CD4-positive, alpha-beta memory T cell (primary cell): ENCODE measurements at regions of chr1 and their contacts with region 1.

Region 1: GRCh38 chr1:99849744-99850458 is at the start of gene AGL:
- DNase-seq: peak; percentile 87 to 89 (median 88)
- H3K4me3 ChIP-seq: peak within 1 kb of the TSS; percentile 61 to 92
- H3K4me3 Mint-ChIP-seq: peak within 1 kb of the TSS; percentile 97 to 99 (median 98)
- H3K27ac ChIP-seq: peak within 1 kb of the TSS; percentile 61
- H3K27ac Mint-ChIP-seq: peak within 1 kb of the TSS; percentile 87 to 97 (median 95)
- H3K4me1 ChIP-seq: peaks cover 18% of the 10 kb centered on the region
- H3K4me1 Mint-ChIP-seq: peaks cover 21 to 34% (median 26%) of the 10 kb centered on the region in 4 donors
- H3K27me3 ChIP-seq: no peaks in the 10 kb centered on the region
- H3K27me3 Mint-ChIP-seq: no peaks in the 10 kb centered on the region
- total RNA-seq, gene AGL: 19.0 to 20.5 TPM

Region 2: GRCh38 chr1:99704356-99704816 is 145.5 kb before region 1 on chr1:
- CTCF ChIA-PET with region 1: no interaction called
- POLR2A ChIA-PET with region 1: no interaction called
- intact Hi-C with region 1: no loop called
- DNase-seq: no peak
- H3K4me3 ChIP-seq: peak overlapping the region in 1 of 2 donors; percentile 12
- H3K4me3 Mint-ChIP-seq: peak overlapping the region; percentile 27 to 81 (median 62)
- H3K27ac ChIP-seq: no peak overlapping the region
- H3K27ac Mint-ChIP-seq: peak overlapping the region in 4 of 7 donors; percentile 6 to 60 (median 30)
- H3K4me1 ChIP-seq: peaks cover 21% of the 10 kb centered on the region
- H3K4me1 Mint-ChIP-seq: peaks cover 12 to 24% (median 15%) of the 10 kb centered on the region in 4 donors
- H3K27me3 ChIP-seq: no peaks in the 10 kb centered on the region
- H3K27me3 Mint-ChIP-seq: peaks cover 6 to 8% of the 10 kb centered on the region in 2 donors

Region 3: GRCh38 chr1:99969729-99970621 is 120.1 kb after region 1 on chr1 and contains the start of gene SLC35A3:
- CTCF ChIA-PET with region 1: no interaction called
- POLR2A ChIA-PET with region 1: interaction called, 16 read pairs
- intact Hi-C with region 1: loop called (anchors 2 kb)
- DNase-seq: peak; percentile 75 to 82 (median 78)
- H3K4me3 ChIP-seq: peak within 1 kb of the TSS; percentile 31 to 74
- H3K4me3 Mint-ChIP-seq: peak within 1 kb of the TSS; percentile 99 to 100 (median 100)
- H3K27ac ChIP-seq: peak within 1 kb of the TSS; percentile 75
- H3K27ac Mint-ChIP-seq: peak within 1 kb of the TSS; percentile 91 to 100 (median 98)
- H3K4me1 ChIP-seq: peaks cover 34% of the 10 kb centered on the region
- H3K4me1 Mint-ChIP-seq: peaks cover 16 to 47% (median 32%) of the 10 kb centered on the region in 4 donors
- H3K27me3 ChIP-seq: no peaks in the 10 kb centered on the region
- H3K27me3 Mint-ChIP-seq: no peaks in the 10 kb centered on the region
- total RNA-seq, gene SLC35A3: 26.6 to 31.5 TPM

Region 4: DNA sequence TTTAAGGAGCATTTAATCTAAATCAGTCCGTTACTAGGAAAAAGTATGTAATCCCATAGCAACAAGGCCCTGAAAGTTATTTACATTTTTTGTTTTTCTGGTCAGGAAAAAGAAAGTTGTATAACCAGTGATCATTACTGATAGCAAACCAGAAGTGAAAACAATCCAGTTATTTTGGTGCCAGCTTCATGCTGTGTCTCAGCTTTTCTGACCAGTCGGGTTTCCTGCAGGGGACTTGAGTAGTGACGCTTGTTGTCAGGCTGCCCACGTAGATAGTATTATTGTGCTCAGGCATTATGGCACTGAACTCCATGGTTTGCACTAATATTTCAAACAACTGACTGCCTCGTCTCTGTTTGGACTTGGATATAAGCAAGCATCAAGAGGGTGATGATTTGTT is 227.6 kb after region 1 on chr1:
- CTCF ChIA-PET with region 1: no interaction called
- POLR2A ChIA-PET with region 1: no interaction called
- intact Hi-C with region 1: no loop called
- DNase-seq: no peak
- H3K4me3 ChIP-seq: no peak overlapping the region
- H3K4me3 Mint-ChIP-seq: no peak overlapping the region
- H3K27ac ChIP-seq: no peak overlapping the region
- H3K27ac Mint-ChIP-seq: peak overlapping the region in 4 of 7 donors; percentile 0 to 37 (median 30)
- H3K4me1 ChIP-seq: no peaks in the 10 kb centered on the region
- H3K4me1 Mint-ChIP-seq: peaks cover 0 to 8% (median 3%) of the 10 kb centered on the region in 4 donors
- H3K27me3 ChIP-seq: no peaks in the 10 kb centered on the region
- H3K27me3 Mint-ChIP-seq: no peaks in the 10 kb centered on the region